Panc1 (cell line): ENCODE measurements at regions of chrX and their contacts with region 1.

Region 1: GRCh38 chrX:27236697-27237096 is 226.4 kb downstream of the PPP4R3C start:
- DNase-seq: no peak
- ATAC-seq: no peak
- H3K4me3 ChIP-seq: no peak overlapping the region
- H3K27ac ChIP-seq: no peak overlapping the region
- H3K4me1 ChIP-seq: no peaks in the 10 kb centered on the region
- H3K27me3 ChIP-seq: no peaks in the 10 kb centered on the region
- CTCF ChIP-seq: no peak

Region 2: GRCh38 chrX:27254656-27255055 is 18.0 kb after region 1 on chrX:
- CTCF ChIA-PET with region 1: no interaction called
- POLR2A ChIA-PET with region 1: no interaction called
- in situ Hi-C with region 1: no loop called
- intact Hi-C with region 1: loop called (anchors 1 kb)
- DNase-seq: no peak
- ATAC-seq: no peak
- H3K4me3 ChIP-seq: no peak overlapping the region
- H3K27ac ChIP-seq: no peak overlapping the region
- H3K4me1 ChIP-seq: no peaks in the 10 kb centered on the region
- H3K27me3 ChIP-seq: no peaks in the 10 kb centered on the region
- CTCF ChIP-seq: no peak